Endothelial cell of umbilical vein (primary cell): ENCODE measurements at regions of chr14 and their contacts with region 1.

Region 1: DNA sequence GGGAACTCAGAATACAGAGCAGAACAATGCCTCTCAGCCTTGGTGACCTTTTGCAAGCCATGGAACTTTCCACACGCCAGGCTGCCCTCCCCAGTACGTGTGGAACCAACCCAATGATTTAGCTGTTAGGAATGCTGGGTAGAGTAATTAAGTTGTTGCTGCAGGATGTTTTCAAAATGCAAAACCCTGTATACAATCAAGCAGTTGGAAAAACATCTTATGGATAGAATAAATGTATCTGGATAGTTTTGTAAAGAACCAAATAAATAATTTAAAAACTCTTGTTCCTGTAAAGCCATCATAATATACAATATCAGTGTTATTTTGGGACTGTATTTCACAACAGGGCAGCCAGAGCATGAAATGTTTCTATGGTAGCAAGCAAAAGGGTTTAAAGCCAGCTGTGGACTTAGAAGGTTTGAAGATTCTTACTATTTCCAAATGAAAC is 19.4 kb downstream of the PPP1R36 start:
- DNase-seq: peak; percentile 91
- H3K4me3 ChIP-seq: no peak overlapping the region
- H3K27ac ChIP-seq: no peak overlapping the region
- H3K4me1 ChIP-seq: peaks cover 33% of the 10 kb centered on the region
- H3K27me3 ChIP-seq: no peaks in the 10 kb centered on the region
- CTCF ChIP-seq: no peak
- POLR2A ChIP-seq: no peak

Region 2: GRCh38 chr14:64503478-64504309 is 65.5 kb before region 1 on chr14 and contains the start of gene ZBTB25:
- CTCF ChIA-PET with region 1: no interaction called
- POLR2A ChIA-PET with region 1: no interaction called
- dilution Hi-C with region 1: no loop called
- intact Hi-C with region 1: loop called (anchors 2 kb)
- DNase-seq: peak; percentile 95
- H3K4me3 ChIP-seq: peak within 1 kb of the TSS; percentile 71 to 97 (median 93)
- H3K27ac ChIP-seq: peak within 1 kb of the TSS; percentile 95
- H3K4me1 ChIP-seq: peaks cover 38% of the 10 kb centered on the region
- H3K27me3 ChIP-seq: no peaks in the 10 kb centered on the region
- CTCF ChIP-seq: no peak
- POLR2A ChIP-seq: peak; percentile 84
- total RNA-seq, gene ZBTB25: 6.4 and 7.7 TPM in 2 replicates

Region 3: DNA sequence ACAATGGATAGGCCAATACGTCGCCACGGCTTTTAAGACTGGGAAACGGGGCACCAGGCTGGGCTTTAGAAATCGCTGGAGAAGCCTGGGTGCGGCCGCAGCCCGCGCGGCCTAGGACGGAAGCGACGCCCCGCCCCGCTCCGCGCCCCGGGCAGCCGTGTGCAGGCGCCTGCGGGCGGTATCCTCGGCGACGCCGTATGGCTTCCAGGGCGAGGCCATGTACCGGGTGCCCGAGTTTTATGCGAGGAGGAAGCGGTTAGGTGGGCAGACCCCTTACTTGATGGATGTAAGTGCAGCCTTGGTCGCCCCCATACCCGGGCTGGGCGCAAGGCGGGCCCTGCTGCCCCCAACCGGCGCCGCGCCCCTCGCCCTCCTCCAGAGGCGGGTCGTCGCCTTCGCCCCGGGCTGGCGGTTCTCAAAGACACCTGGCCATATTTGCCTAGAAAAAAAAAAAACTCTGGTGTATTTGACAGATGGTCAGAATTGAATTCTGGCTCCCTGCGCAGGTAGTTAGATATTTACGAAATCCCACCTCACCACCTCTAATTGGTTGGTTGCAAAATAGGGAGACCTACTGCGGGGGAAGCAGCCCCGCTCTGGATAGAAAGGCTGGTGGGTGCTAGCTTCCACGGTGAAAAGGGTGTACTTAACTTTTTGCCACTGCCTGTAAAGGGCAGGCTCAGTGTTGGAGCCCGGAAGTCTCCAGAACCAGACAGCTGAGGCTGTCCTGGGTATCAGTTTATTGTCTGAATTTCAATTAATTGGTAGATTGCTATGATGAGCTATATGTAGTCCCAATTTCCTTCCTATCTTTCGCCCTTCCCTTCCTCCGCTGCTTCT is 19.2 kb before region 1 on chr14 and contains the start of gene PPP1R36:
- CTCF ChIA-PET with region 1: interaction called, 8 read pairs
- POLR2A ChIA-PET with region 1: no interaction called
- dilution Hi-C with region 1: no loop called
- intact Hi-C with region 1: loop called (anchors 1 kb)
- DNase-seq: no peak
- H3K4me3 ChIP-seq: peak within 1 kb of the TSS; percentile 16 to 30 (median 21)
- H3K27ac ChIP-seq: no peak within 1 kb of the TSS
- H3K4me1 ChIP-seq: peaks cover 11% of the 10 kb centered on the region
- H3K27me3 ChIP-seq: peaks cover 20% of the 10 kb centered on the region in 2 experiments
- CTCF ChIP-seq: no peak
- POLR2A ChIP-seq: no peak
- total RNA-seq, gene PPP1R36: 0.51 and 0.60 TPM in 2 replicates